H1 (cell line): ENCODE measurements at regions of chr5 and their contacts with region 1.

Region 1: GRCh38 chr5:171595801-171596231 is 176.4 kb downstream of the FGF18 start:
- DNase-seq: no peak
- H3K4me3 ChIP-seq: no peak overlapping the region
- H3K27ac ChIP-seq: no peak overlapping the region
- H3K4me1 ChIP-seq: peaks cover 0 to 6% (median 0%) of the 10 kb centered on the region in 4 experiments; a peak in 1 of 7 replicates
- H3K27me3 ChIP-seq: no peaks in the 10 kb centered on the region
- CTCF ChIP-seq: no peak
- EP300 ChIP-seq: no peak
- POLR2A ChIP-seq: no peak
- RAD21 ChIP-seq: no peak

Region 2: GRCh38 chr5:171614971-171615653 is 19.3 kb after region 1 on chr5:
- CTCF ChIA-PET with region 1: interaction called, 18 read pairs
- POLR2A ChIA-PET with region 1: interaction called, 3 read pairs
- DNase-seq: peak in 1 of 2 experiments; percentile 67
- H3K4me3 ChIP-seq: no peak overlapping the region
- H3K27ac ChIP-seq: no peak overlapping the region
- H3K4me1 ChIP-seq: peaks cover 0 to 14% (median 12%) of the 10 kb centered on the region in 4 experiments; a peak in 4 of 7 replicates
- H3K27me3 ChIP-seq: peaks cover 0 to 50% (median 34%) of the 10 kb centered on the region in 4 experiments; a peak in 6 of 7 replicates
- CTCF ChIP-seq: no peak
- EP300 ChIP-seq: no peak
- POLR2A ChIP-seq: no peak
- RAD21 ChIP-seq: no peak